AG04449 (cell line): ENCODE measurements at regions of chr19 and their contacts with region 1.

Region 1: GRCh38 chr19:18469069-18469846 is 31.3 kb upstream of the ISYNA1 start:
- DNase-seq: no peak
- H3K4me3 ChIP-seq: no peak overlapping the region
- CTCF ChIP-seq: peak; percentile 83

Region 2: DNA sequence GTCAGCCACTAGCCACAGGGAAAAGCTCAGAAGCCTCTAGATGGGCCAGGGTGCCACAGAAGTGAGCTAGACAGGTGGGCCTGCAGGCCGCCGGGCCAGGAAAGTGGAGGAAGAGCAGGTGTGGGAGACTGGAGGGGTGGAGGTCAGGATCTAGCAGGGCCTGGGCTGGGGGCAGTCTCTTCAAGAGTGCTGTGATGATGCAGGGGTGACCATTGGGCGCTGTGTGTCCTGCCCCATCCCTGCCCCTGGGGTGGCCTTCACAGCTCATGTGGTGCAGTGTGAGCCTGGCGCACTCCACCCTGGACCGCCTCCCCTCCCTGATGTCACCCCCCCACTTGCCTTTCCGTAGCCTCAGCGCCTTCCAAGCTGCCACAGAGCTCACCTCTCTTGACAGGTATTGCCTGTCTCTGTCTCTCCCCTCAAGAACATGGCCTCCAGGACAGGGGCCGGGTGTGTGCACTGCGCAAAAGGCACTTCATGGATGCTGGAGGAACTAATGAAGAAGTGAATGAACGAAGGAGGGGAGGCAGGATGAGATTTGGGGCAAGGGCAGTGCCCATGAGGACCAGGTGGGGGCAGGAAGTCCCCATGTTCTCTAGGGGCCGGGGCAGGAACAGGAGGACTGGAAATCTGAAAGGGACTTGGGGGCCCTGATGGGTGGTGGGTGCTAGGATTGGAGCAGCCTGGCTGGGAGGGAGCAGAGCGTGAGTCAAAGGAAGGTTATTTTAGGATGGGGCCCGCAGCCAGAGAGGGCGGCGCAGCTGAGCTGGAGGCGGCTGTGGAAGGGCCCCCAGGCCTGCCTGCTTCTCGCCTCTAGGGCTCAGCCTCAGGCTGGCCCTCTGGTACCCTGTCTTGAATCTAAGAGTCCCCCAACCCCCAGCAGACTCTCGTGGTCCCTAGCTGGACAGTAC is 43.5 kb before region 1 on chr19:
- CTCF ChIA-PET with region 1: no interaction called
- POLR2A ChIA-PET with region 1: no interaction called
- DNase-seq: no peak
- H3K4me3 ChIP-seq: no peak overlapping the region
- CTCF ChIP-seq: peak; percentile 23

Region 3: DNA sequence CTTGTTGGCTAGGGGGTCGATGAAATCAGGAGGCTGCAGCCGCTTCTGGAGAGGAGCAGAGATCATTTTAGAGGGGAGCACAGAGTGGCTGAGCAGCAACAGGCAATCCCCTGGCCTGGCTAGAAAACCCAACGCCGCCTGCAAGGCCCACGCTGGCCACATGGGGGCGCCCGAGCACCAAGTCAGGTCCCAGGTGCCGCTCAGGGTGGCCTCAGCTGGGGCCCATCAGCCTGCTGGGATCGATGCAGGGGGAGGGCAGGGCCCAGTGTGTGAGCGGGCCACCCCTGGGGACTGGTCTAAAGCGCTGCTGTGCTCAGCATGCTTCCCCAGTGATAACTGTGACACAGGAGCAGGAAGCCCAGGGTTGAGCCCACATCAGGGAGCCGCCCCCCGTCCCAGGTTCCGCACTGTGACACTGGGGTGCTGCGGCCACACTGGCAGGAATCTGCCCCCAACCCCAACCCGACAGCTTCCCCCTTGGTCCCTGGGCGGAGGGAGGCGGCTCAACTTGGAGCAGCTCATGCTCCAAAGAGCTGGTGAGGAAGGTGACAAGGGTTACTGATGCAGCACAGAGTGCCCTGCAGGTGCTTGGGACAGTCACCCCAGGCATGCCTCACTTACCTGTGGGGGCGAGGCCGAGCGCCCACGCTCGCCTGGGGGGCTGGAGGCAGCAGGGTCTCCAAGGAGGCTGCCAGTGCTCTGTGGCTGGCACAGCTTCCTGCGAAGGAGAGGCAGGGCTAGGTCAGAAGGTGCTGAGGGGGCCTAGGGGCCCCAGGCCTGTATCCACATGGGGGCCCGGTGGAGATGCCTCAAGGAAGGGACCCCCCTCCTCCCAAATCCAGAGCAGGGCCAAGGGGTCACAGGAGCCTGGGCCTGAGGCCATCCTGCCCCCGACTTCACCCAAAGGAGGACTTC is 18.1 kb before region 1 on chr19:
- CTCF ChIA-PET with region 1: interaction called, 11 read pairs
- POLR2A ChIA-PET with region 1: no interaction called
- DNase-seq: no peak
- H3K4me3 ChIP-seq: no peak overlapping the region
- CTCF ChIP-seq: peak; percentile 99

Region 4: DNA sequence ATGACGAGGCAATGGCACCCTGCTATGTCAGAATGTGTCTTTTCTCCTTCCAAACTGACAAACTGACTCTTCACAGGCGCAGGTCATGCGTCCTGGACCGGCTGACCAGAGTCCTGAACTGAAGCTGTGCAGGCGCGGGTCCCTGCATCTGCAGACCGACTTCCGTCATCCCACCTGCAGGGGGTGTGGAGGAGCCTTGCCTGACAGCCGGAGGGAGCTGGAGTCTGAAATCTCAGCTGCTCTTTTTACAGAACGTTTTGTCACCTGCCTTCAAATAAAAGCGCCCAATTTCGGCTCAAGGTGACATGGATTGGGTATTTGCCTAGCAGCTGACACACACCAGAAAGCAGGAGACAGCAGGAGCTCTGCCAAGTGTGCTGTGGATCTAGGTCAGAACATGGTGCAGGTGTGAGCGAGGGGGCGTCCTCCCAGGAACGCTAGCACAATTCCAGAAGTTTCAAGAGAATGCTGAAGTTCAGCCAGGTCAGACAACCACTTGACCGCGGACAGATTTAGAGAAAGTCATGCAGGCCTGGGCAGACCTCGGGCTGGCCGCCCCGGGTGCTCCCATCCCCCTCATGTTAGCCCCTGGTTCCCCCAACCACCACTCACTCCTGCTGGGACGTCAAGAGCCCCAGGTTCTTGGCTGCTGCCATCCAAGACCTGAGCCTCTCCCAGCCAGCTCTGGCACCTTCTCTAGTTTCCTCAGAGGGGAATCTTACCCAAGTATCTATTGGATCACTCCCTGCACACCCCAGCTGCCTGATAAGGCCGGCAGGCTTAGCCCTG is 19.8 kb after region 1 on chr19:
- CTCF ChIA-PET with region 1: interaction called, 26 read pairs
- POLR2A ChIA-PET with region 1: no interaction called
- DNase-seq: no peak
- H3K4me3 ChIP-seq: no peak overlapping the region
- CTCF ChIP-seq: peak; percentile 24

Region 5: DNA sequence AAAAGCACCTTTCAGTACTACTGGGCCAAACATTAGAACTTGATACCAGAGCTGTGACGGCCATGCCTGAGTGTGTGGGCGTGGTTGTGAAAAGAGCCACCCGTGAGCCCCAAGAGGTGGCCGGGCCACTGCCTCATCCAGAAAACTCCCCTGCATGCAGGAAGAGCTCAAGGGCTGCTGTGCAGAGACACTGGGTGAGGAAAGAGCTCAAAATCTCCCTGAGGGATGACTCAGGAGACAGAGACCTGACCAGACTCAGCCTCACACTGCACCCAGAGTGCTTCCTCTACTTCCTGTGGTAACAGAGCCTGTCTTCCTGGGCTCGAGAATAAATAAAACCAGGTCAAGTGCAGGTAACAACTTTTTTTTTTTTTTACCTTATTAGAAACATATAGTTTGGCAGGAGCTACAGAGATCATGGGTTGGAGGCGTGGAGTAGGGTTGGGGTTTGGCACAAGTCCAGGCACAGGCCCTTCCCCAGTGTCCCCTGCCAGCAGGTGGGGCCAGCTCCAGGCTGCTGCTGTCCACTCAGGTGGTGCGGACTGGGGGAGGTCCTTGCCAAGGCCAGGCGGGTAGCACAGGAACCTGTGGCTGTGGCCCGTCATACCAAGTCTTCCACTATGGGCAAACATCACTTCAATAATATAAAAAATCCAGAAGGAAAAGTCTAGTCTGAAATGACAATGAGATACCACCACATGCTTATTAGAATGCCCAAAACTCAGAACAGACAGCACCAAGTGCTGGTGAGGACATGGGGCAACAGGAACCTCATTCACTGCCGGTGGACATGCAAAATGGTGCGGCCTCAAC is 27.1 kb after region 1 on chr19:
- CTCF ChIA-PET with region 1: interaction called, 15 read pairs
- POLR2A ChIA-PET with region 1: no interaction called
- DNase-seq: no peak
- H3K4me3 ChIP-seq: no peak overlapping the region
- CTCF ChIP-seq: no peak

Region 6: DNA sequence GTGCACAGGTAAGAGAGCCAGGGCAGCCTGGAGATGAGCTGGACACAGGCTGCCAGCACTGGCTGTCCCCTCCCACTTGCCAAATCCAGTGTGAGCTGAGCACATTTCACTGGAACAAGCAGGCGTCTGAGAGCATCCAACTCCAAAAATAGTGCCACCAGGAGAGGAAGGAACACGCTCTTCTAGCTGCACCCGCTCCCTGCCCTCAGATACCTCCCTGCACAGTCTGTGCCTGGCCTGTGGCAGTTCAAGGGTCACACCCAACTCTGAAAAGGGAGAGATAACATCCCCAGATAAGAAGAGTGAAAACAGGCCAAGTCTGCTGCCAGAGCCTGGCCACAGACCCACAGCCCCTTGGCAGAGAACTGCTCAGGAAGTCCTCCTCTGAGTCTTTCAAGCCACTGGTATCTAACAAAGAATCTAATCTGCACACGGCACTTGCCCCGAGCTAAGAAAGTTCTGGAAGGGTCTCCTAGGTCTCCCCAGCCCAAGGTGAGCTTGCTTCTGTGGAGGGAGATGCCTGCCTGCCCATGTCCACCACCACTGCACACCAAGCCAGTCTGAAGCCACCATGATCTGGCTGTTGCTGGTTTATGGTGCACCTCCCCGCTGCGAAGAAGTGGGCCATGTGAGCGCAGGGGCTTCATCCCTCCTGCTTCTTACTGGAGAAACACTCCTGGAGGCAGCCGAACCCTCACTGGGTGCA is 37.9 kb after region 1 on chr19:
- CTCF ChIA-PET with region 1: interaction called, 18 read pairs
- POLR2A ChIA-PET with region 1: no interaction called
- DNase-seq: no peak
- H3K4me3 ChIP-seq: no peak overlapping the region
- CTCF ChIP-seq: no peak

Region 7: DNA sequence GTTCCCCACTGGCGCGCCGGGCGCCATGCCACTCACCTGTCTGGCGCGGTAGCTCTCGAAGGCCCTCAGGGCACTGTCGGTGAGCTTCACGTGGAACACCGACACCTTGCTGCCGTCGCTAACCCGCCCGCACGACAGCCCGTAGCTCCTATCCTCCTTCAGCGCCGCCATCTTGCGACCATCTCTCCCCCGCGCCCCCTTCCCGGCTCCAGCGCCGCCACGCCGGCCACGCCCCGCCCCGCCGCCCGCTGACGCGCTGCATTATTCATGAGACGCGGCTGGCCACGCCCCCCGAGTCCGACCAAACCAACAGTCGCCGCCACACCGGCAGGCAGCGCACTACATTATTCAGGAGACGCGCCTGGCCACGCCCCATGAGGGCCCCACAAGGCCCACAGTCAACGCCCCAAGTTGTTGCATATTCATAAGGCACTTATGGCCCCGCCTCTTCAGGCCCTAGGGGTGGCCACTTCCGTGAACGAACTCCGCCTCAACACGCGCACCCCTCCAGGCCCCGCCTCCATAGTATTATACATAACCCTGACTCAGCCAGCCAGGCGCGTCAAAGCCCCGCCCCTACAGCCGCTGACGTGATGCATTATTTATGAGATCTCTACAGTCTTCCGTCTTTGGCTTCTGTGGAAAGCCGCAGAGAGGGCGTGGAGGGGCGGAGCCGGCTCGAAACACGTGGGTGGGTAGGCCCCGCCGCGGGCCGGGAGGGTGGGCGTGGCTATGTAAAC is 52.8 kb after region 1 on chr19 and contains the start of gene ELL:
- CTCF ChIA-PET with region 1: interaction called, 42 read pairs
- POLR2A ChIA-PET with region 1: no interaction called
- DNase-seq: peak; percentile 99
- H3K4me3 ChIP-seq: peak within 1 kb of the TSS; percentile 97
- CTCF ChIP-seq: peak; percentile 31

Region 8: GRCh38 chr19:18571564-18572300 is 102.5 kb after region 1 on chr19 and contains the start of gene UBA52:
- CTCF ChIA-PET with region 1: interaction called, 15 read pairs
- POLR2A ChIA-PET with region 1: no interaction called
- DNase-seq: peak; percentile 62
- H3K4me3 ChIP-seq: peak within 1 kb of the TSS; percentile 96
- CTCF ChIP-seq: no peak